CD8-positive, alpha-beta T cell (primary cell): ENCODE measurements at regions of chr1 and their contacts with region 1.

Region 1: GRCh38 chr1:78649628-78650027 is at the start of gene IFI44:
- DNase-seq: peak; percentile 50 to 90 (median 74)
- ATAC-seq: peak; percentile 81
- H3K4me3 ChIP-seq: peak within 1 kb of the TSS; percentile 49 to 52
- H3K4me3 Mint-ChIP-seq: peak within 1 kb of the TSS; percentile 83
- H3K27ac ChIP-seq: peak within 1 kb of the TSS; percentile 40 to 65
- H3K27ac Mint-ChIP-seq: peak within 1 kb of the TSS; percentile 88
- H3K4me1 ChIP-seq: peaks cover 50% of the 10 kb centered on the region
- H3K4me1 Mint-ChIP-seq: peaks cover 75% of the 10 kb centered on the region
- H3K27me3 ChIP-seq: no peaks in the 10 kb centered on the region
- H3K27me3 Mint-ChIP-seq: no peaks in the 10 kb centered on the region
- CTCF ChIP-seq: no peak
- total RNA-seq, gene IFI44: 24.2 to 30.5 TPM

Region 2: GRCh38 chr1:78004719-78005447 is 644.7 kb before region 1 on chr1 and contains the start of gene DNAJB4:
- CTCF ChIA-PET with region 1: no interaction called
- POLR2A ChIA-PET with region 1: no interaction called
- intact Hi-C with region 1: loop called in 1 of 2 experiments (anchors 10 kb)
- DNase-seq: peak; percentile 20 to 94 (median 60)
- ATAC-seq: peak; percentile 98
- H3K4me3 ChIP-seq: peak within 1 kb of the TSS; percentile 53 to 71
- H3K4me3 Mint-ChIP-seq: peak within 1 kb of the TSS; percentile 93
- H3K27ac ChIP-seq: peak within 1 kb of the TSS; percentile 96 to 98
- H3K27ac Mint-ChIP-seq: peak within 1 kb of the TSS; percentile 99
- H3K4me1 ChIP-seq: peaks cover 16% of the 10 kb centered on the region
- H3K4me1 Mint-ChIP-seq: peaks cover 49% of the 10 kb centered on the region
- H3K27me3 ChIP-seq: no peaks in the 10 kb centered on the region
- H3K27me3 Mint-ChIP-seq: no peaks in the 10 kb centered on the region
- CTCF ChIP-seq: no peak
- total RNA-seq, gene DNAJB4: 13.3 to 13.4 TPM

Region 3: GRCh38 chr1:78527706-78528105 is 121.9 kb before region 1 on chr1:
- CTCF ChIA-PET with region 1: no interaction called
- POLR2A ChIA-PET with region 1: no interaction called
- intact Hi-C with region 1: no loop called
- DNase-seq: no peak
- ATAC-seq: no peak
- H3K4me3 ChIP-seq: no peak overlapping the region
- H3K4me3 Mint-ChIP-seq: no peak overlapping the region
- H3K27ac ChIP-seq: no peak overlapping the region
- H3K27ac Mint-ChIP-seq: no peak overlapping the region
- H3K4me1 ChIP-seq: no peaks in the 10 kb centered on the region
- H3K4me1 Mint-ChIP-seq: no peaks in the 10 kb centered on the region
- H3K27me3 ChIP-seq: no peaks in the 10 kb centered on the region
- H3K27me3 Mint-ChIP-seq: peaks cover 3% of the 10 kb centered on the region
- CTCF ChIP-seq: no peak

Region 4: DNA sequence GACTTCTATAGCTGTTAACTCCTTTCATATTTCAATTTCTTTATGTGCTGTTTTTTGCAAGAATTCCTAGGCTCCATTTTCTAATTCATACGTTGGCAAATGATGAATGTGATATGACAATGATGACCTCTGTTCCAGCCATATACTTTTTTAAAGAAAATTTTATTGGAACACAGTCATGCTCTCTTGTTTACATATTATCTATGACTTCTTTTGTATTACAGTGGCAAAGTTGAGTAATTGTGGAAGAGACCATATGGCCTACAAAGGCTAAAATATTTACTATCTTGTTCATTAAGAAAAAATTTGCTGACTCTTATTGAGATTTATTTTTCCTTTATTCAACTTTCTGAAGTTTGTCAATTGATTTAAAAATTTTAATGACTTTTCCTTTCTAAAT is 22.3 kb before region 1 on chr1:
- CTCF ChIA-PET with region 1: no interaction called
- POLR2A ChIA-PET with region 1: no interaction called
- intact Hi-C with region 1: loop called in 1 of 2 experiments (anchors 2 kb)
- DNase-seq: no peak
- ATAC-seq: no peak
- H3K4me3 ChIP-seq: no peak overlapping the region
- H3K4me3 Mint-ChIP-seq: no peak overlapping the region
- H3K27ac ChIP-seq: no peak overlapping the region
- H3K27ac Mint-ChIP-seq: no peak overlapping the region
- H3K4me1 ChIP-seq: peaks cover 15% of the 10 kb centered on the region
- H3K4me1 Mint-ChIP-seq: peaks cover 47% of the 10 kb centered on the region
- H3K27me3 ChIP-seq: no peaks in the 10 kb centered on the region
- H3K27me3 Mint-ChIP-seq: no peaks in the 10 kb centered on the region
- CTCF ChIP-seq: no peak

Region 5: DNA sequence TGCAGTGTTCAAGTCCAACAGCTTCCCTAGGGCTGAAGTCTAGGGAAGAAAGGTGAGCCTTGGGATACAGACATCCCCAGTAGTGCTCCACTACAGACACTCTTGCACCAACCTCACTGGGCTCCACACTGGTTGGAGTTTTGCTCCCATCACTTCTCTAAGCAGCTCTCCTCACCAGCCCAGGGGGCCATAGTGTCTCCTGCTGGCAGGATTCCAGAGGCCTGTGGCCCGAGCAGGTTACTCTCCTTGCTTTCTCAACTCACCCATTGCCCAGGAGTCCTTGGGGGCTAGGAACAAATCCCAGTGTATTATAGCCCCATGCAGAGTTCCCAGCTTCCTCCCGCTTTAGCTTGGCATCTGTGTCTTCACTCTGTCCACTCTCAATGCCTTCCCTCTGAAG is 52.8 kb after region 1 on chr1:
- CTCF ChIA-PET with region 1: no interaction called
- POLR2A ChIA-PET with region 1: no interaction called
- intact Hi-C with region 1: no loop called
- DNase-seq: no peak
- ATAC-seq: no peak
- H3K4me3 ChIP-seq: no peak overlapping the region
- H3K4me3 Mint-ChIP-seq: no peak overlapping the region
- H3K27ac ChIP-seq: no peak overlapping the region
- H3K27ac Mint-ChIP-seq: no peak overlapping the region
- H3K4me1 ChIP-seq: no peaks in the 10 kb centered on the region
- H3K4me1 Mint-ChIP-seq: no peaks in the 10 kb centered on the region
- H3K27me3 ChIP-seq: no peaks in the 10 kb centered on the region
- H3K27me3 Mint-ChIP-seq: peaks cover 19% of the 10 kb centered on the region
- CTCF ChIP-seq: no peak